Gastrocnemius medialis (tissue), 4 donors: ENCODE measurements at regions of chr9 and their contacts with region 1.

Region 1: GRCh38 chr9:96854073-96854876 is at the start of gene ZNF782:
- DNase-seq: peak; percentile 90 to 91
- ATAC-seq: peak; percentile 97
- H3K4me3 ChIP-seq: peak within 1 kb of the TSS; percentile 70 to 91 (median 88)
- H3K27ac ChIP-seq: peak within 1 kb of the TSS; percentile 81 to 93 (median 89)
- H3K4me1 ChIP-seq: peaks cover 26% of the 10 kb centered on the region in 2 donors
- H3K27me3 ChIP-seq: no peaks in the 10 kb centered on the region
- CTCF ChIP-seq: no peak
- POLR2A ChIP-seq: peak; percentile 81 to 82
- total RNA-seq, gene ZNF782: 4.0 to 8.4 (median 5.6) TPM

Region 2: GRCh38 chr9:96418074-96418809 is 436.0 kb before region 1 on chr9 and contains the start of gene ZNF367:
- in situ Hi-C with region 1: no loop called
- intact Hi-C with region 1: loop called (anchors 2 kb)
- DNase-seq: peak; percentile 96 to 98
- ATAC-seq: peak; percentile 77 to 82
- H3K4me3 ChIP-seq: peak within 1 kb of the TSS; percentile 71 to 89 (median 84)
- H3K27ac ChIP-seq: peak within 1 kb of the TSS; percentile 99
- H3K4me1 ChIP-seq: peaks cover 21 to 26% of the 10 kb centered on the region in 2 donors
- H3K27me3 ChIP-seq: no peaks in the 10 kb centered on the region
- CTCF ChIP-seq: no peak
- POLR2A ChIP-seq: peak in 1 of 2 donors; percentile 8
- total RNA-seq, gene ZNF367: 0.15 to 5.1 (median 1.7) TPM

Region 3: DNA sequence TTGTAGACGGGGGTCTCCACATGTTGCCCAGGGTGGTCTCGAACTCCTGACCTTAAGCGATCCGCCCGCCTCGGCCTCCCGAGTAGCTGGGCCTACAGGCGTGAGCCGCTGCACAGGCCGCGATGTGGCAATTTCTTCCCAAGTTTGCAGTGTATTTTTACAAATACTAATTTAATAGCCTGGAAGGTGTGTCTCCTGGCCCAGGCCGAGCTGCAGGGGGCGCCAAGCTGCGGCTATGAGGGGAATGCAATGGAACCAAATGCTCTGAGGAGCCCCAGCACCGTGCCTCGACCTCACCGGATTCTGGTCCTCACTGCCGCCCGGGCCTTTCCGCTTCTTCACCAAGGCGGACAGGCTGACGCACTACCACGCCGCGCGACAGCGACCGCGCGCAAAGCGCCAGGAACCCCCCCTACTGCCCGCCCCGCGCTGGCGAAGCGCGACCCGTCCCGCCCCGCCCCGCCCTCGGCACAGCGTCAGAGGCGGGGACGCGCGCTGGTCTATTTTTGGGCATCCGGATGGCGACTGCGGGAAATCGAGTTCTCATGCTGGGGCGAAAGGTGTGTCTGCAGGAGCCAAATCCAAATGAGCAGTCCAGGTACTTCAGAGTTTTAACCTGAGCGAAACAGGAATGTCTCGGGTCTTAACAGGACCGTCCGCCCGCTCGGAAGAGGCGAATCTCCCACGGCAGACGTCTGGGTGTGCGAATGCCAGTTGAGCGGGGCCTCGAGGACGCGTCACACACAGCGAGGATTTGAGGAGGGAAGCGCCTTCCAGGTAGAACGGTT is 167.5 kb before region 1 on chr9:
- in situ Hi-C with region 1: no loop called
- intact Hi-C with region 1: loop called (anchors 5 kb)
- DNase-seq: peak; percentile 44 to 77
- ATAC-seq: peak; percentile 92
- H3K4me3 ChIP-seq: peak overlapping the region; percentile 68 to 83 (median 74)
- H3K27ac ChIP-seq: peak overlapping the region; percentile 75 to 82 (median 77)
- H3K4me1 ChIP-seq: no peaks in the 10 kb centered on the region
- H3K27me3 ChIP-seq: no peaks in the 10 kb centered on the region
- CTCF ChIP-seq: peak; percentile 30 to 65 (median 40)
- POLR2A ChIP-seq: peak; percentile 12 to 25

Region 4: DNA sequence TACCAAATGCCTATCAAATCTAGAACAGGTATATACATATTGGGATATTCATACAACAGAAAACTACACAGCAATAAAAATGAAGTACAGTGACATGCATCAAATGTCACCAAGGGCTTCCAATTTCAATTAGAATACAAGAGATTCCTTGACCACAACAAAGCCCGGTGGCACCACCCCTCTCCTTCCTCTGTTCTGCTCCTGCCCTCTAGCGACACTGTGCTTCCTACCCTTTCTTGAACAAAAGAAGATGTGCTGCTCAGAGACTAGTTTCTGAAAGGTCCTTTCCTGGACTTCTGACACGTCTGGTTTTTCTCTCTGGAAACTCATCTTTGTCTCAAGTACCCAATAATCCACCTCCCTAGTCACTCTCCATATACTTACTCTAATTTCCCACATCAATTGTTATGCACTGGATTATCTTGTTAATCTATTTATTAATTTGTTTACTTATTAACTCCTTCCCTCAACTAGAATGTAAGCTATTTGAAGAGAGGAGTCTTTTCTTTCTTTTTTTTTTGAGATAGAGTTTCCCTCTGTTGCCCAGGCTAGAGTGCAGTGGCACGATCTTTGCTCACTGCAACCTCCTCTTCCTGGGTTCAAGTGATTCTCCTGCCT is 255.0 kb after region 1 on chr9:
- in situ Hi-C with region 1: loop called in 3 of 4 experiments (anchors 10 kb)
- intact Hi-C with region 1: loop called (anchors 1 kb)
- DNase-seq: peak; percentile 14 to 40
- ATAC-seq: peak in 1 of 2 donors; percentile 78
- H3K4me3 ChIP-seq: no peak overlapping the region
- H3K27ac ChIP-seq: no peak overlapping the region
- H3K4me1 ChIP-seq: no peaks in the 10 kb centered on the region
- H3K27me3 ChIP-seq: no peaks in the 10 kb centered on the region
- CTCF ChIP-seq: peak in 3 of 5 experiments; percentile 28 to 61 (median 57)
- POLR2A ChIP-seq: no peak

Region 5: GRCh38 chr9:97348866-97349265 is 494.6 kb after region 1 on chr9:
- in situ Hi-C with region 1: no loop called
- intact Hi-C with region 1: no loop called
- DNase-seq: no peak
- ATAC-seq: no peak
- H3K4me3 ChIP-seq: no peak overlapping the region
- H3K27ac ChIP-seq: no peak overlapping the region
- H3K4me1 ChIP-seq: no peaks in the 10 kb centered on the region
- H3K27me3 ChIP-seq: no peaks in the 10 kb centered on the region
- CTCF ChIP-seq: no peak
- POLR2A ChIP-seq: no peak

Region 6: GRCh38 chr9:97386733-97387503 is 532.6 kb after region 1 on chr9:
- in situ Hi-C with region 1: loop called in 1 of 4 experiments (anchors 25 kb)
- intact Hi-C with region 1: no loop called
- DNase-seq: peak in 1 of 2 donors; percentile 23
- ATAC-seq: peak; percentile 36 to 70
- H3K4me3 ChIP-seq: no peak overlapping the region
- H3K27ac ChIP-seq: no peak overlapping the region
- H3K4me1 ChIP-seq: peaks cover 0 to 6% of the 10 kb centered on the region in 2 donors
- H3K27me3 ChIP-seq: peaks cover 0 to 19% (median 3%) of the 10 kb centered on the region in 3 donors
- CTCF ChIP-seq: peak; percentile 76 to 87 (median 80)
- POLR2A ChIP-seq: no peak

Region 7: GRCh38 chr9:97411789-97412625 is 557.7 kb after region 1 on chr9 and contains the start of gene TDRD7:
- in situ Hi-C with region 1: loop called in 2 of 4 experiments (anchors 25 kb)
- intact Hi-C with region 1: no loop called
- DNase-seq: peak; percentile 54 to 71
- ATAC-seq: peak; percentile 87 to 93
- H3K4me3 ChIP-seq: peak within 1 kb of the TSS; percentile 70 to 98 (median 94)
- H3K27ac ChIP-seq: peak within 1 kb of the TSS; percentile 63 to 86 (median 77)
- H3K4me1 ChIP-seq: peaks cover 3 to 12% of the 10 kb centered on the region in 2 donors
- H3K27me3 ChIP-seq: no peaks in the 10 kb centered on the region
- CTCF ChIP-seq: peak; percentile 89 to 98 (median 97)
- POLR2A ChIP-seq: peak in 1 of 2 donors; percentile 3
- total RNA-seq, gene TDRD7: 2.9 to 5.7 (median 3.5) TPM

Region 8: DNA sequence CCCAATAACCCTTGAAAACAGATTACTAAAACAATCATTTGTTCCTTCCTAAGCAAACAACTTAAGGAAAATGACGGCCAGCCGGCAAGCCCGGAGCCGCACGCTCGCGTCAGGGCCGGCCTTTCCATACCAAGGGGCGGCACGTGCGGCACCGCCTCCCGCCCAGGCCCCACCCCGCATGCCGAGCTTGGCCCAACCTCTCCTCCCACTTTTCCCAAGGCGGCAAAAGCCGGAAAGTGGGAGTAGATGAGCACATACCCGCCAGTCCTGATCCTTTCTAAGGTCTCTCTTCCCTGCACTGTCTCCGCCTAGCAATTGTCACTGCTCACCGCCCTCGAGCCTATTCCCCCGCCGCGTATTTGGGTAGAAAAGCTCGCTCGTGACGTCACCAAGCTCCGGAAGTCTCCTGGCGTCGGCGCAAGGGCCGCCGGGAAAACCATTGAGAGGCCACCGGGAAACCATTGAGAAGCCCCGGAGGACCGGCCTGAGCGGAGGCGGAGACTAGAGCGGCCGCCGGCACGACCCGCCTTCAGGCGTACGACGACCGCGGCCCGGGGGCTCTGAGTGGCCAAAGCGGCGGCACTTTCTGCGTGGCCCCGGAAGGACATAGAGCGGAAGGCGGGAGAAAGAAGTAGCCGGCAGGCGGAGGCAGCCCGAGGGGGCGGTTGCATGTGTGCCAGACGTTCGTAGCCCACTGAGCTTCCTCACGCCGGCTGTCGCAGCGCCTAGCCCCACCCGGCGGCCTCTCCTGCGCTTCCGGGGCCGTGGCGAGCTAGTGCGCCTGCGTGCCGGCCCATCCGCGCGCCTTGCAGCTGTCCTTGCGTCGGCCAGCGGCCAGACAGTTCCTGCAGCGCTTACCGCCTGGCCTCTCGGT is 778.9 kb after region 1 on chr9 and contains the starts of genes NCBP1 and TSTD2:
- in situ Hi-C with region 1: no loop called
- intact Hi-C with region 1: loop called (anchors 10 kb)
- DNase-seq: peak; percentile 96 to 98
- ATAC-seq: peak; percentile 87 to 88
- H3K4me3 ChIP-seq: peak within 1 kb of the TSS; percentile 86 to 92 (median 88)
- H3K27ac ChIP-seq: peak within 1 kb of the TSS; percentile 91 to 99 (median 98)
- H3K4me1 ChIP-seq: peaks cover 53 to 56% of the 10 kb centered on the region in 2 donors
- H3K27me3 ChIP-seq: no peaks in the 10 kb centered on the region
- CTCF ChIP-seq: peak in 1 of 5 experiments; percentile 8
- POLR2A ChIP-seq: peak; percentile 83 to 87
- total RNA-seq, gene NCBP1: 8.2 to 17.2 (median 15.7) TPM
- total RNA-seq, gene TSTD2: 11.6 to 19.9 (median 14.5) TPM